H1 (cell line): ENCODE measurements at regions of chr6 and their contacts with region 1.

Region 1: DNA sequence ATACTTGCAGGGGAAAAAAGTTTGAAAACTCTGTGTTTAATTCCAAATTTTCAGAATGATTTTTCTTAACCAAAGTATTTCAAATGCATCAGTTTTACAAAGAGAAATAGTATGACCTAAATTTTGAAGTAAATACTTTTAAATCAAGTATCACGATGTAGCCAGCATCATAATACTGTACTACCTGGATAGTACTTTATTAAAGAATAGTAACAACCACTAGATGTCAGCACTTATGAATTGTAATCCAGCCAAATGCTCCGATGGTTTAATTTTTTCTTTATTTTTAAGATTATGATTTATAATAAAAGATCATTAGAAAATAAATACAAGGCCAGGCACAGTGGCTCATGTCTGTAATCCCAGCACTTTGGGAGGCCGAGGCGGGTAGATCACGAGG is 37.2 kb upstream of the HACE1 start:
- DNase-seq: no peak
- H3K4me3 ChIP-seq: no peak overlapping the region
- H3K27ac ChIP-seq: no peak overlapping the region
- H3K4me1 ChIP-seq: no peaks in the 10 kb centered on the region
- H3K27me3 ChIP-seq: no peaks in the 10 kb centered on the region
- CTCF ChIP-seq: no peak
- EP300 ChIP-seq: no peak
- POLR2A ChIP-seq: no peak
- RAD21 ChIP-seq: no peak

Region 2: GRCh38 chr6:104884867-104885517 is 11.9 kb before region 1 on chr6:
- CTCF ChIA-PET with region 1: interaction called, 18 read pairs
- POLR2A ChIA-PET with region 1: no interaction called
- DNase-seq: no peak
- H3K4me3 ChIP-seq: no peak overlapping the region
- H3K27ac ChIP-seq: no peak overlapping the region
- H3K4me1 ChIP-seq: no peaks in the 10 kb centered on the region
- H3K27me3 ChIP-seq: no peaks in the 10 kb centered on the region
- CTCF ChIP-seq: no peak
- EP300 ChIP-seq: no peak
- POLR2A ChIP-seq: no peak
- RAD21 ChIP-seq: no peak